K562 (cell line): ENCODE measurements at regions of chr20 and their contacts with region 1.

Region 1: DNA sequence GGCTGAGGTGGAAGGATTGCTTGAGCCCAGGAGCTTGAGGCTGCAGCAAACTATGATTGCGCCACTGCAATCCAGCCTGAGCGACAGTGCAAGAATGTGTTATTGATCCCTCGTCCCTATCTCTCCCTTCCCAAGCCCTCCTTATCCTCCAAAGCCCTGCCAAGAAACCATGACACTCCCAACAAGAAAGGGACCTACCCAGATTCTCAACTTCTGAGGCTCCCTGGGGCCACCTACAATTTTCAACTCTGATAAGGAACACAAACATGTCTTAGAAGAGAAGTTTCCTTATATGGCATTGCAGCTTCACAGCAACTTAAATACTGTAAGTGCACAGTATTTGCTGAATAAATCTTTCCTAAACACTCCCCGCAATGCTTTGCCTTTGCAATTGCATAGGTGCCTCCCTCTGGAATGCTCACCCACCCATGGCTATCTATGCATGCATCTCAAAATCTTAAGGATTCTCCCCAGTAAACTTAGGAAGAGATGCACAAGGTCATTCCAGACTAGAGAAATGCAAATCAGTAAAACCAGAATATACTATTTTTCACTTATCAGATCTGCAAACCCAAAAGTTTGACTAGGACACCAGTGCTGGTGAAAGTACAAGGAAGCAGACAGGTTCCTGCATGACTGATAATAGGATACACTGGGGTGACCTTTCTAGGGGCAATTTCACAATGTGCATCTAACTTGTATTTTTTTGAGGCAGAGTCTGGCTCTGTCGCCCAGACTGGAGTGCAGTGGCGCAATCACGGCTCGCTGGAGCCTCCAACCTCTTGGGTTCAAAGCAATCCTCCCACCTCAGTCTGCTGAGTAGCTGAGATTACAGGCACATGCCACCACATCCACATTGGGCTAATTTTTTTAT is 11.6 kb downstream of the COMMD7 start:
- DNase-seq: peak; percentile 44 to 68 (median 58)
- ATAC-seq: peak; percentile 69
- H3K4me3 ChIP-seq: no peak overlapping the region
- H3K27ac ChIP-seq: peak overlapping the region; percentile 59; the same call in 2 of the 3 replicates
- H3K4me1 ChIP-seq: peaks cover 19 to 21% of the 10 kb centered on the region in 2 experiments
- H3K27me3 ChIP-seq: no peaks in the 10 kb centered on the region
- CTCF ChIP-seq: no peak
- EP300 ChIP-seq: no peak; the same call in 1 of the 2 replicates
- POLR2A ChIP-seq: no peak
- RAD21 ChIP-seq: no peak

Region 2: DNA sequence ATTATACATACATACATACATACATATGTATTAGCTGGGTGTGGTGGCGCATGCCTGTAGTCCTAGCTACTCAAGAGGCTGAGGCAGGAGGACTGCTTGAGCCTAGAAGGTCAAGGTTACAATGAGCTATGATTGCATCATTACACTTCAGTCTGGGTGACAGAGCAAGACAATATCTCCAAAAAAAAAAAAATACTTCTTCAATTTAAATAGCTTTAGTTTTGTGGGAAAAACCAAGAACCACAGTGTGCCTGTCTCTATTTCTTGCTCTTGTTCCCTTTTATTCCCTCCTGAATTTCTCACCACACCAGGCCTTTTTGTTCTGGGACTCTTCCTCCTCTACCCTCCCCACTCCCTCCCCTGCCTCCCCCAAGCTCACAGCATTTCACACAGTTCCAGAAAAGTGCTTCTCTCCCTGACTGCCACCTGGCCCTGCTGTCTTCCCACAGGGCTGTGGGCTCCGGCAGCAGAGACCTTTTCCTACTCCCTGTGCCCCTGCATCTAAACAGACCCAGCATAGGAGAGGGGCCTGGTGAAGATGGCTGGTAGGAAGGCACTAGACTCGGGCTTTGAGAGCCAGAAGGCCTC is 59.1 kb before region 1 on chr20:
- CTCF ChIA-PET with region 1: no interaction called
- POLR2A ChIA-PET with region 1: no interaction called
- in situ Hi-C with region 1: no loop called
- intact Hi-C with region 1: no loop called
- DNase-seq: peak in 1 of 4 experiments; percentile 55
- ATAC-seq: peak; percentile 76
- H3K4me3 ChIP-seq: no peak overlapping the region
- H3K27ac ChIP-seq: peak overlapping the region; percentile 82
- H3K4me1 ChIP-seq: peaks cover 25 to 31% of the 10 kb centered on the region in 2 experiments
- H3K27me3 ChIP-seq: no peaks in the 10 kb centered on the region
- CTCF ChIP-seq: no peak
- EP300 ChIP-seq: no peak
- POLR2A ChIP-seq: no peak
- RAD21 ChIP-seq: no peak

Region 3: GRCh38 chr20:32743237-32744112 is 11.8 kb after region 1 on chr20 and contains the start of gene COMMD7:
- CTCF ChIA-PET with region 1: no interaction called
- POLR2A ChIA-PET with region 1: interaction called, 19 read pairs
- in situ Hi-C with region 1: no loop called
- intact Hi-C with region 1: no loop called
- DNase-seq: peak; percentile 42 to 75 (median 66)
- ATAC-seq: peak; percentile 80
- H3K4me3 ChIP-seq: peak within 1 kb of the TSS; percentile 64
- H3K27ac ChIP-seq: peak within 1 kb of the TSS; percentile 70
- H3K4me1 ChIP-seq: peaks cover 24 to 47% of the 10 kb centered on the region in 2 experiments; a peak in 4 of 5 replicates
- H3K27me3 ChIP-seq: no peaks in the 10 kb centered on the region
- CTCF ChIP-seq: no peak
- EP300 ChIP-seq: peak; percentile 77; the same call in 1 of the 2 replicates
- POLR2A ChIP-seq: no peak
- RAD21 ChIP-seq: peak; percentile 6 to 16; a peak in 1 of 4 replicates
- polyA plus RNA-seq, gene COMMD7: 11.9 to 17.0 TPM